Cardiac septum (tissue), 1 donor: ENCODE measurements at regions of chr1 and their contacts with region 1.

Region 1: GRCh38 chr1:150515328-150516048 is at the start of gene FALEC:
- DNase-seq: peak; percentile 99
- total RNA-seq, gene FALEC: 0.46 TPM

Region 2: DNA sequence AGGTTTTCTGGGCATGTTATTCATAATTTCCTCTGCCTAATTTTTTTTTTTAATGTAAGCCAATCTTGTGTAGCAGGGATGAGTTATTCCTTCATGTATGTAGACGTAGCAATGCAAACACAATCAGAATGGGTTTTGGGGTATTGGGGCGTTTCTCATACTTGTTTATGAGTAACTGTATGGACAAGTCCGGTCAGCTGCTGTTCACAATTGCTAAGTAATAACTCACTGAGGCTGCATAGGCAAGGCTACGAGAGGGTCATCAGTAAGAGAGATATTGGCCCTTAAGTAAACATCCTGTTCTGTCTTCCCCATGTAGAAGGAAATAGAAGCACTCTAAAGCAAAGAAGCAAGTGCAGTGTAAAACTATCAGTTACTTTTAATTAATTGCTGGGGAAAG is 37.8 kb before region 1 on chr1:
- intact Hi-C with region 1: loop called (anchors 5 kb)
- DNase-seq: no peak

Region 3: GRCh38 chr1:150486964-150487762 is 28.3 kb before region 1 on chr1 and contains the start of gene TARS2:
- intact Hi-C with region 1: loop called (anchors 2 kb)
- DNase-seq: peak; percentile 95
- total RNA-seq, gene TARS2: 30.7 TPM

Region 4: DNA sequence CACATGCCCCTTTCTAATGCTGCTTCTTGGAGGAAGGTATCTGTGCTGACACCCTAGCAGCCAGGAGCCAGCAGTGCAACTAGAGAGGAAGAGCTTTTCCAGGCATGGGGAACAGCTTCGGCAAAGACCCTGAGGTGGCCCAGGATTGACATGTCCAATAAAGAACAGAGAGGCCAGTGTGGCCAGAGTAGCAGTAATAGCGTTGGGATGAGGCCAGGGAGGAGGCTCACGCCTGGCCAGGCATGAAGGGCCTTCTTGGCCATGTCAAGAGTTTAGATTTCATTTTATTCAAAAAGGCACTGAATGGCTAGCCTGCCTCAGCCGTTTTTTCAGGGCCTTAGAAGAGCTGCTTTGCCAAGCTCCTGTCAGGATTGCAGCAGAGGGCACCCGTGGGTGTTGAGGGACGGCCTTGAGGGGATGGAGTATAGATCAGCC is 17.4 kb after region 1 on chr1:
- intact Hi-C with region 1: loop called (anchors 2 kb)
- DNase-seq: no peak